A673 (cell line): ENCODE measurements at regions of chr4 and their contacts with region 1.

Region 1: GRCh38 chr4:69896530-69897116 is 34.2 kb upstream of the CSN1S1 start:
- DNase-seq: no peak
- H3K4me3 ChIP-seq: no peak overlapping the region
- H3K27ac ChIP-seq: no peak overlapping the region
- H3K4me1 ChIP-seq: no peaks in the 10 kb centered on the region
- H3K27me3 ChIP-seq: no peaks in the 10 kb centered on the region
- CTCF ChIP-seq: peak; percentile 46

Region 2: GRCh38 chr4:70183168-70183939 is 286.7 kb after region 1 on chr4:
- CTCF ChIA-PET with region 1: no interaction called
- POLR2A ChIA-PET with region 1: no interaction called
- intact Hi-C with region 1: loop called (anchors 5 kb)
- DNase-seq: peak; percentile 46
- H3K4me3 ChIP-seq: no peak overlapping the region
- H3K27ac ChIP-seq: no peak overlapping the region
- H3K4me1 ChIP-seq: no peaks in the 10 kb centered on the region
- H3K27me3 ChIP-seq: no peaks in the 10 kb centered on the region
- CTCF ChIP-seq: peak; percentile 65

Region 3: GRCh38 chr4:70269674-70270073 is 373.1 kb after region 1 on chr4:
- CTCF ChIA-PET with region 1: no interaction called
- POLR2A ChIA-PET with region 1: no interaction called
- intact Hi-C with region 1: loop called (anchors 10 kb)
- DNase-seq: peak; percentile 9
- H3K4me3 ChIP-seq: no peak overlapping the region
- H3K27ac ChIP-seq: no peak overlapping the region
- H3K4me1 ChIP-seq: no peaks in the 10 kb centered on the region
- H3K27me3 ChIP-seq: no peaks in the 10 kb centered on the region
- CTCF ChIP-seq: peak; percentile 35; the same call in 1 of the 2 replicates

Region 4: GRCh38 chr4:70505151-70505748 is 608.6 kb after region 1 on chr4:
- CTCF ChIA-PET with region 1: no interaction called
- POLR2A ChIA-PET with region 1: no interaction called
- intact Hi-C with region 1: loop called (anchors 5 kb)
- DNase-seq: peak; percentile 46
- H3K4me3 ChIP-seq: no peak overlapping the region
- H3K27ac ChIP-seq: no peak overlapping the region
- H3K4me1 ChIP-seq: no peaks in the 10 kb centered on the region
- H3K27me3 ChIP-seq: no peaks in the 10 kb centered on the region
- CTCF ChIP-seq: peak; percentile 79